T-cell (primary cell): ENCODE measurements at regions of chr17 and their contacts with region 1.

Region 1: DNA sequence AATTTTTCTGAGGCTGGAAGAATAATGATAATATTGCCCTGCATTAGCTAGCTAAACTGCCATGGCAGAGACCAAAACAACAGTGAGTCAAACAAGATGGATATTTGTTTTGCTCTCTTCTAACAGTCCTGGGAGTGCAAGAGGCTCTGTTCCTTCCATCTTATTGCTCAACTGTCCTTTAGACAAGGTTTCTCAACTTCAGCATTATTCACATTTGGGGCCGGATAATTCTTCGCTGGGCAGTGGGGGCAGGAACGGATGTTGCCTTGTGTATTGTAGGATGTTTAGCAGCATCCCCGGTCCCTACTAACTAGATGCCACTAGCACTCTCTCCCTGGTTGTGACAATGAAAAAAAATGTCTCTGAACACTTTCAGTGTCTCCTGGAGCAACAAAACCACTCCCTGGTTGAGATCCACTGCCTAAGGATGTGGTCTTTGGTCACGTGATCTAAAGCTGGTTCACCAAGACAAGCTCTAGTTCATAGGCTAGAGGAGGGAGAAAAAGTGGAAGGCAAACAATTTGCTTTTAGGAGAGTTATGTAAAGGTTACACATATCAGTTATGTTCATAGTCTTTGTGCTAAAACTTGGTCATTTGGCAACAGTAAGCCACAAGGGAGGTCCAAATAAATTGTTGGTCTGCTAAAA is 144.4 kb downstream of the PCTP start:
- DNase-seq: peak in 1 of 35 experiments; percentile 12
- ATAC-seq: peak in 2 of 4 experiments; percentile 58 to 74
- H3K4me3 ChIP-seq: no peak overlapping the region
- H3K4me3 Mint-ChIP-seq: no peak overlapping the region
- H3K27ac ChIP-seq: no peak overlapping the region
- H3K27ac Mint-ChIP-seq: no peak overlapping the region
- H3K4me1 ChIP-seq: peaks cover 0 to 10% of the 10 kb centered on the region in 2 experiments
- H3K4me1 Mint-ChIP-seq: peaks cover 5 to 11% (median 5%) of the 10 kb centered on the region in 3 donors
- H3K27me3 ChIP-seq: no peaks in the 10 kb centered on the region
- H3K27me3 Mint-ChIP-seq: peaks cover 12 to 13% of the 10 kb centered on the region in 2 donors

Region 2: GRCh38 chr17:55334285-55334684 is 561.0 kb before region 1 on chr17:
- CTCF ChIA-PET with region 1: interaction called in 1 of 2 experiments, 10 read pairs
- POLR2A ChIA-PET with region 1: no interaction called
- DNase-seq: no peak
- ATAC-seq: no peak
- H3K4me3 ChIP-seq: no peak overlapping the region
- H3K4me3 Mint-ChIP-seq: no peak overlapping the region
- H3K27ac ChIP-seq: no peak overlapping the region
- H3K27ac Mint-ChIP-seq: no peak overlapping the region
- H3K4me1 ChIP-seq: no peaks in the 10 kb centered on the region
- H3K4me1 Mint-ChIP-seq: peaks cover 0 to 5% (median 0%) of the 10 kb centered on the region in 3 donors
- H3K27me3 ChIP-seq: peaks cover 0 to under 1% of the 10 kb centered on the region in 2 experiments
- H3K27me3 Mint-ChIP-seq: peaks cover 5 to 8% of the 10 kb centered on the region in 2 donors

Region 3: GRCh38 chr17:56030009-56030612 is 134.9 kb after region 1 on chr17:
- CTCF ChIA-PET with region 1: interaction called in 1 of 2 experiments, 11 read pairs
- POLR2A ChIA-PET with region 1: no interaction called
- DNase-seq: no peak
- ATAC-seq: no peak
- H3K4me3 ChIP-seq: no peak overlapping the region
- H3K4me3 Mint-ChIP-seq: no peak overlapping the region
- H3K27ac ChIP-seq: no peak overlapping the region
- H3K27ac Mint-ChIP-seq: no peak overlapping the region
- H3K4me1 ChIP-seq: no peaks in the 10 kb centered on the region
- H3K4me1 Mint-ChIP-seq: no peaks in the 10 kb centered on the region
- H3K27me3 ChIP-seq: no peaks in the 10 kb centered on the region
- H3K27me3 Mint-ChIP-seq: peaks cover 0 to 8% of the 10 kb centered on the region in 2 donors

Region 4: DNA sequence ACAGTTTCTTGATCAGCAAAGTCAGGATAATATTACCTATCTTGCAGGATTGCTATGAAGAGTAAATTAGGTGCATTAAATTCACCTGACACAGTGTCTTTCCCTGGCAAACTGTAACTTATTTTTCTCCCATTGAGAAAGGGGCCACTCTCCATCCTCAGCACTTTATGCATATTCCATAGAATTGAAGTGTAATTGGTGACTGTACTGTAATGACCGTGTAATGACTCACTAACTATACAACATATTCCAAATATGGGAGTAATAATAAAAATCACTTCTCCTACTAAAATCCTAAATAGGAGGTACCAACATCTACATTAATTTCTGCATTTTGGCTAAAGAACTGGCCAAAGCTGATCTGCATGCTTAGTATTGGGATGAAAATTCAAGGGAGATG is 556.4 kb after region 1 on chr17:
- CTCF ChIA-PET with region 1: no interaction called
- POLR2A ChIA-PET with region 1: no interaction called
- DNase-seq: no peak
- ATAC-seq: no peak
- H3K4me3 ChIP-seq: no peak overlapping the region
- H3K4me3 Mint-ChIP-seq: no peak overlapping the region
- H3K27ac ChIP-seq: no peak overlapping the region
- H3K27ac Mint-ChIP-seq: no peak overlapping the region
- H3K4me1 ChIP-seq: no peaks in the 10 kb centered on the region
- H3K4me1 Mint-ChIP-seq: no peaks in the 10 kb centered on the region
- H3K27me3 ChIP-seq: no peaks in the 10 kb centered on the region
- H3K27me3 Mint-ChIP-seq: peaks cover 5 to 11% of the 10 kb centered on the region in 2 donors